Heart left ventricle (tissue), 16 donors: ENCODE measurements at regions of chr12 and their contacts with region 1.

Region 1: GRCh38 chr12:86838711-86839110 is 582.5 kb upstream of the MGAT4C start:
- DNase-seq: no peak
- ATAC-seq: no peak
- H3K4me3 ChIP-seq: peak overlapping the region in 2 of 12 donors; percentile 17 to 27
- H3K27ac ChIP-seq: no peak overlapping the region
- H3K4me1 ChIP-seq: no peaks in the 10 kb centered on the region
- H3K27me3 ChIP-seq: no peaks in the 10 kb centered on the region
- CTCF ChIP-seq: peak in 1 of 12 donors; percentile 19
- POLR2A ChIP-seq: no peak

Region 2: DNA sequence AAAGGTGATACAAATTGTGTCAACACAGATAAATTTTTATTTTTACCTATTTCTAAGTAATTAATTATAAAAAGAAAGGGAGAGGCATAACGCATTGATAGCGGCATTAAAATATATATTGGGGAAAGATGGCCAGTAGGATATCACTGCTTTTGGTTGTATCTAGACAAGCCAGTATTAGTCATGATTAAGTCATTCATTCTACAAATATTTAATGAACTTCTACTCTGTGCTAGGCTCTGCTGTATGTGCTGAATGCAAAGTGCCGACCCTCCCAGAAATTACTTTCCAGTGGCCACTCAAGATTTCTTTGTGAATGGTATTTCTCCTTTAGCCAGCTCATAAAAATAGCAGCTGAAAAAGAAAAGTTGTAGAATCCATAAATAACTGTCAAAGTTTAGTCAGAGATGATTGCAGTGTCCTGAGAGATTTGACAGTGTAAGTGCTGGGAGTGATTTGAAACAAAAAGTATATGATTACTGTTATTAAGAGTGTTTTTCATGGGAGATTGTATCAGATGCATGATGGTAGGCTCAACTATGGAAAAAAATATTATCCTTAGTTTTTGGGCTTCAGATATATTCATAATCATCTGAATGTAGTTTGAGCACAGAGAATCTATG is 715.8 kb before region 1 on chr12:
- intact Hi-C with region 1: no loop called
- DNase-seq: no peak
- ATAC-seq: no peak
- H3K4me3 ChIP-seq: no peak overlapping the region
- H3K27ac ChIP-seq: no peak overlapping the region
- H3K4me1 ChIP-seq: no peaks in the 10 kb centered on the region
- H3K27me3 ChIP-seq: no peaks in the 10 kb centered on the region
- CTCF ChIP-seq: no peak
- POLR2A ChIP-seq: no peak

Region 3: DNA sequence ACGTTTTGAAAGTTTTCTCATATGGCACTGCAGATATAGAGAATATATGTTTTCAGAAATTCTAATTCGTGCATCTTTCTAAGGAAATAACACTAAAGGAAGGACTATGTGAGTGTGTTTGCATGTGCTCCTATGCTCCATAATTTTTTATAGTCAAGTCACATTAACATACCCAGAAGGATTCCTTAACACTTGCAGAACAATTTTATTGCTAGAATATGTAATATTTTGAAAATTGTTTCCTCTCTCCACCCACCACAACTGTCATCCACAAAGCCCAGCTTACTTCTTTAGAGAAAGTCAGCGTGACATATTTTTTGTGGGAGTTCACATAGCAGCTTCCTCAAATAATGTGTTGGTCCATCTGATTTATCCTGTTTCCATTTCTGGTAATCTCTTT is 22.1 kb after region 1 on chr12:
- intact Hi-C with region 1: loop called in 2 of 10 experiments (anchors 2 kb)
- DNase-seq: no peak
- ATAC-seq: no peak
- H3K4me3 ChIP-seq: no peak overlapping the region
- H3K27ac ChIP-seq: no peak overlapping the region
- H3K4me1 ChIP-seq: no peaks in the 10 kb centered on the region
- H3K27me3 ChIP-seq: no peaks in the 10 kb centered on the region
- CTCF ChIP-seq: no peak
- POLR2A ChIP-seq: no peak

Region 4: DNA sequence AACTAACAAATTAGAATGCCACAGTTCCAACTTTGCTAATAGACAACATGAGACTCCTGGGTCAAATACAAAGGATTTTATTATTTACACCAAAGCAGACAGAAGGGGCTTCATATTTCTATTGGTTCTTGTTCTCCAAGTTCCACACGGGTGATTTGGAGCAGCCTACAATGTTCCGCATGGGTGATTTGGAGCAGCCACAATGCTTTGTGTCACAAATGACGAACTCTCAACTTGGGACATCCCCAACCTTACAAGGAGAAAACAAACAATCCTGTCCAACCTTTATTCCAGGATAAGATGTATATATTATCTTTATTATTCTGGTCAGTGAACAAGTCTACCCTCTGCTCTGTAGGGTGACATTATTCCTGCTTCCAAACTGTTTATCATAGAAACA is 111.7 kb after region 1 on chr12:
- intact Hi-C with region 1: no loop called
- DNase-seq: no peak
- ATAC-seq: no peak
- H3K4me3 ChIP-seq: no peak overlapping the region
- H3K27ac ChIP-seq: no peak overlapping the region
- H3K4me1 ChIP-seq: no peaks in the 10 kb centered on the region
- H3K27me3 ChIP-seq: no peaks in the 10 kb centered on the region
- CTCF ChIP-seq: no peak
- POLR2A ChIP-seq: no peak

Region 5: DNA sequence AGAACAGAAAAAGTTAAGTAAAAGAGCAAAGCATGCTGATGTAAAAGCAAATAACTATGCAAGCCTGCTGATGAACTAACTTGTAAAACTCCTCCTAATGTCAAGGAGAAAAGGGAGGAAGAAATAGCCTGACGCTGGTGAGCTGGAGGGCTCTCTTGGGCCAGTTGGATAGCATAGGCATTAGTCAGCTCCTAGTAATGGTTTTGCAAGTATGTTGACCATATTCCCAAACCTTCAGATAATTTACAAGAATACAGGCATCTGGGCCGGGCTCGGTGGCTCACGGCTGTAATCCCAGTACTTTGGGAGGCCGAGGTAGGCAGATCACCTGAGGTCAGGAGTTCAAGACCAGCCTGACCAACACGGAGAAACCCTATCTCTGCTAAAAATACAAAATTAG is 319.1 kb after region 1 on chr12:
- intact Hi-C with region 1: no loop called
- DNase-seq: no peak
- ATAC-seq: no peak
- H3K4me3 ChIP-seq: no peak overlapping the region
- H3K27ac ChIP-seq: no peak overlapping the region
- H3K4me1 ChIP-seq: peaks cover 0 to 2% (median 0%) of the 10 kb centered on the region in 12 donors
- H3K27me3 ChIP-seq: no peaks in the 10 kb centered on the region
- CTCF ChIP-seq: no peak
- POLR2A ChIP-seq: no peak